HCT116 (cell line): ENCODE measurements at regions of chr2 and their contacts with region 1.

Region 1: GRCh38 chr2:17780546-17780945 is 26.6 kb downstream of the GEN1 start:
- DNase-seq: no peak
- ATAC-seq: no peak
- H3K4me3 ChIP-seq: no peak overlapping the region
- H3K27ac ChIP-seq: no peak overlapping the region
- H3K4me1 ChIP-seq: no peaks in the 10 kb centered on the region
- H3K27me3 ChIP-seq: no peaks in the 10 kb centered on the region
- CTCF ChIP-seq: no peak
- POLR2A ChIP-seq: no peak
- RAD21 ChIP-seq: no peak

Region 2: GRCh38 chr2:17136877-17137276 is 643.7 kb before region 1 on chr2:
- CTCF ChIA-PET with region 1: no interaction called
- POLR2A ChIA-PET with region 1: no interaction called
- RAD21 ChIA-PET with region 1: no interaction called
- intact Hi-C with region 1: no loop called
- DNase-seq: no peak
- ATAC-seq: no peak
- H3K4me3 ChIP-seq: no peak overlapping the region
- H3K27ac ChIP-seq: no peak overlapping the region
- H3K4me1 ChIP-seq: no peaks in the 10 kb centered on the region
- H3K27me3 ChIP-seq: peaks cover 23% of the 10 kb centered on the region
- CTCF ChIP-seq: no peak
- POLR2A ChIP-seq: no peak
- RAD21 ChIP-seq: no peak

Region 3: DNA sequence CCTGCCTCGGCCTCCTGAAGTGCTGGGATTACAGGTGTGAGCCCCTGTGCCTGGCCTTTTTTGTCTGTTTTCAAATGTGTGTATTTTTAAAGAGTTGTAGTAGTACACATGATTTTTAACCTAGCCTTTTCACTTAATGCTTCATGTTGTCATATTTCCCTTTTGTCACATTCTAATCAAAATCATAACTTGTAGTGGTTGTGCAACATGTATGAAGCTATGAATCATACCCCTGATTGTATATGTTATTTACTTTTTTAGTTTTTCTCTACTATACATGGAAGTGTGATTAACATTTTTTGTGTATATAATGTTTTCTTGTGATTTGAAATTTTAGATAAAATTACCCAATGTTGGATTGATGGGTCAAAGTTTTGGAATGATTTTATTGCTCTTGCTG is 18.1 kb before region 1 on chr2:
- CTCF ChIA-PET with region 1: no interaction called
- POLR2A ChIA-PET with region 1: no interaction called
- RAD21 ChIA-PET with region 1: no interaction called
- intact Hi-C with region 1: loop called (anchors 1 kb)
- DNase-seq: no peak
- ATAC-seq: no peak
- H3K4me3 ChIP-seq: no peak overlapping the region
- H3K27ac ChIP-seq: no peak overlapping the region
- H3K4me1 ChIP-seq: no peaks in the 10 kb centered on the region
- H3K27me3 ChIP-seq: no peaks in the 10 kb centered on the region
- CTCF ChIP-seq: no peak
- POLR2A ChIP-seq: no peak
- RAD21 ChIP-seq: no peak

Region 4: GRCh38 chr2:17813742-17814473 is 33.4 kb after region 1 on chr2:
- CTCF ChIA-PET with region 1: no interaction called
- POLR2A ChIA-PET with region 1: no interaction called
- RAD21 ChIA-PET with region 1: no interaction called
- intact Hi-C with region 1: no loop called
- DNase-seq: no peak
- ATAC-seq: no peak
- H3K4me3 ChIP-seq: no peak overlapping the region
- H3K27ac ChIP-seq: no peak overlapping the region
- H3K4me1 ChIP-seq: peaks cover 0 to 5% of the 10 kb centered on the region in 2 experiments; a peak in 1 of 4 replicates
- H3K27me3 ChIP-seq: no peaks in the 10 kb centered on the region
- CTCF ChIP-seq: no peak
- POLR2A ChIP-seq: no peak
- RAD21 ChIP-seq: no peak